Posterior vena cava (tissue), 2 donors: ENCODE measurements at regions of chr10 and their contacts with region 1.

Region 1: GRCh38 chr10:25604591-25604990 is 329.4 kb upstream of the MYO3A start:
- DNase-seq: no peak

Region 2: DNA sequence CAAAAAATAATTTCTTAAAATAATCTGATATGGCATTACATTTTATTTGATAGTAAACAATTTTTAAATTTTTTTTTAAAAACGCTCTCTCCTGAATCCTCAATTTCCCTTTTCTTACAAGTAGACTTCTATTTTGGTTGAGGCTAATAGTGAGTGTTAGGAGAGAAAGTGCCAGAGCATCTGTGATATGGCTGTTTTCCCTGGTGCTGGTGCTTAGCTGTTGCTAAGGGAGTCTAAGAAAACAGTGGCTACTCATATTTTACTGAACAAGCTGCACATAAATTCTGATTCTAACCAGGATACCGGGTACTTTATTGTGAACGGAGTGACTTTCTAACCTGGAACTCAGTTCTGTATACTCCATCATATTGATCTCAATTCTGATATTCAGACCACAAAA is 1706.7 kb before region 1 on chr10:
- intact Hi-C with region 1: loop called in 1 of 2 experiments (anchors 5 kb)
- DNase-seq: no peak